ENCODE measurements at regions of chr11 and their contacts with region 1.

Region 1: DNA sequence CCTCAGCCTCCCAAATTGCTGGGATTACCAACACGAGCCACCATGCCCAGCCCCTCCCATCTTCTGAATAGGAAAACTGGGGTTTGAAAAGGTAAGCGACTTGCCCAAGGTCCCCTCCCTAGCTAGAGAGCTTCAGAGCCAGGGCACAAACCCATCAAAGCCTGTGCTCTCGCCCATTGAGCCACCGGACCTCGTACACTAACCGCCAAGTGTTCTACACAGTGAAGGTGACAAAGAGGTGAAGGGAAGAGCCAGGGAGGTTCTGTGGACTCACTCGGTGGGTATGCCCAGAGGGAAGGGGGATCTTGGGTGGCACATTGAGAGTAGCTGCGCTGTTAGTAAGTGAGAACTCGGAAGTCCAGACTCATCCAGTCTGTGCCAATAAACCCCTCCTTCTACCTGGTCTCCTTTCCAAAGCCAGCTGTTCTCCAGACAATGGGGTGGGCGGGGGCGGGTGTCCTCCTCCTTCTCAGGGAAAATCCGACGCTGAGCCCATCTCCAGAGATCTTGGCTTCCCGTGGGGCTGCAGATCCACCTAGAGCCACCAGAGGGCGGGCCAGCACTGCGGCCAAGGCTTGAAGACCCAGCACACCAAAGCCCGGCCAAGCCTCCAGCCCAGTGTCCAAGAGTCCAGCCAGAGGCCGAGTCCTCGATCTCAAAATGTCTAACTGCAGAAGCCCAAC is 3.2 kb upstream of the RTN4RL2 start:
- DNase-seq: no peak
- H3K4me3 ChIP-seq: peak overlapping the region; percentile 25; the same call in 1 of the 2 replicates
- CTCF ChIP-seq: peak; percentile 98

Region 2: GRCh38 chr11:57260937-57261783 is 195.9 kb before region 1 on chr11:
- CTCF ChIA-PET with region 1: no interaction called
- POLR2A ChIA-PET with region 1: no interaction called
- DNase-seq: no peak
- H3K4me3 ChIP-seq: no peak overlapping the region
- CTCF ChIP-seq: no peak

Region 3: DNA sequence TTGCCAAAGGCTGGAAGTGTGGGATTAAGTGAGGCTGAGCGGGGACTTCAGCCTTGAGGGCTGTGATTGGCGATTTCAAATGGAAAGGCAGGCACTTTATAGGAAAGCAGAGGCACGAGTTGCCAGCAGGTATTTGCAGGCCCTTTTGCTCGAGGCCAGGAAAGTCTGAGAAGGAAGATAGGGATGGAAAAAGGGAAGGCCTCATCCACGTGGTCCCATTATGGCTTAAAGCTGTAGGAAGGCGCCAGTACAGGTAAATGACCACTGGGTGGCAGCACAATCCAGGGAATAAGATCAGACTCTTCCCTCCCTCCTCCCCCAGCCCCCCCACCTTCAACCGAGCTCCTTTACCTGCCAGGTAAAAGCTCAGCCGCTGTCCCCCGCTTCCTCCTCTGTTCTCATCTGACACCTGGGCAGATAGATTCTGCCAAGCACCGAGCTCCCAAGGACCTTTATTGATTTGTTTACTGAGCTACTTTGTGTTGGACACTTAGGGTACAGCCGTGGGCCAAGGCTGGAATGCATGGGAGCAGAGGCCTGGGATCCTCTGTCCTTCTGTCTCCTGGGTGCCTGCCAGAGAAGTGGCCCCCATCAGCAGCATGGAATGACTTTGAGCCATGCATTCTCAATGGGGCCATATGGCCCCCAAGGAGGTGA is 111.4 kb before region 1 on chr11:
- CTCF ChIA-PET with region 1: interaction called, 42 read pairs
- POLR2A ChIA-PET with region 1: no interaction called
- DNase-seq: no peak
- H3K4me3 ChIP-seq: no peak overlapping the region
- CTCF ChIP-seq: peak; percentile 72

Region 4: DNA sequence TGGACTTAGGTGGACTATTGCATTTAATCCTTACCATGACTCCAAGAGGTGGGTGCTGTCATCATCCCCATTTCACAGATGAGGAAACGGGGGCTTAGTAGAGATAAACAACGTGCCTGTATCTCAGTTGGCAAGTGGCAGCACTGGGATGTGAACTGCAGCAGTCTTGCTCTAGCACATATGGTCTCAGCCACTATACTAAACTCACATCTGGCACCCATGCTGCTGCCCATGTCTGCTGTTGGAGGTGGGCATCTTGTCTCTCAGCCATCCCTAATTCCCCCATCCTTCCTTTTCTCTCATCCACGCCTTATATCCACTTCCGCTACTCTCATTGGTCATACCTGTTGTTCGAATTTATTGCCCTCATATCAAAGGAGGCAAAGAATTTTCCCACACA is 80.0 kb before region 1 on chr11:
- CTCF ChIA-PET with region 1: no interaction called
- POLR2A ChIA-PET with region 1: no interaction called
- DNase-seq: no peak
- H3K4me3 ChIP-seq: no peak overlapping the region
- CTCF ChIP-seq: no peak

Region 5: GRCh38 chr11:57444362-57445121 is 12.6 kb before region 1 on chr11:
- CTCF ChIA-PET with region 1: interaction called, 134 read pairs
- POLR2A ChIA-PET with region 1: no interaction called
- DNase-seq: no peak
- H3K4me3 ChIP-seq: no peak overlapping the region
- CTCF ChIP-seq: no peak

Region 6: GRCh38 chr11:57487920-57488659 is 31.0 kb after region 1 on chr11:
- CTCF ChIA-PET with region 1: interaction called, 140 read pairs
- POLR2A ChIA-PET with region 1: no interaction called
- DNase-seq: no peak
- H3K4me3 ChIP-seq: no peak overlapping the region
- CTCF ChIP-seq: no peak

Region 7: DNA sequence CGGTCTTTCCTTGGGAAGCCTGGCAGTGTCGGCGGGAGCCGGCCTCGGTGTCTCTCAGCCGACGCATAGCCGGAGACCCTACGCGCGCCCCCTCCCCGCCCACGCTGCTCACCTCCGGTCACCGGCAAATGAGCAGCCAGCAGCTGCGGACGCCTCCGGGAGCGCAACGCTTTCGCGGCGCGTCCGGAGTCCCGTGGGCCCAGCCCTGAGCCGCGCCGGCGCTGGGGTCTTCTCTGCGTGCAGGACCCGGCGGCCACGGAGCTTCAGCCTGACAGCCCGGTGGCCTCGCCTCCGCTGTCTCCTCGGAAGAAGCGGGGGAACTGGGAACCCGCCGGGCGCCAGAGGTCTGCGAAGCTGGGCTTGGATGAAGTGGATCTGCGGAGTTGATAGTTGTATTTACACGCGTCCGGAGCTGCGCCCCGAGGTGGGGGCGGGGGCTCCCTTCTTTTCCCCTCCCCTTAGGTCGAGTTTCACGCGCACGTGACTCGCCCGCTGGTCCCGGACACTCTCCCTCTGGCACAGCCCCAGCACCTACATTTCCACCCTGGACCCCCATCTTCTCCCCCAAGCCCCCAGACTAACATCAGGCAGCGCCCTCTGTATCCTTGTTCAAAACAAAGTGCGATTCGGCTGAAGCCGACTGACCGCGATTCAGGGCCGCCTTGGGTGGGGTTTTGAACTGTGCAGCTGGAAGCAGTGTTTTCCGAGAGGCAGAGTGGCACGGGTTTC is 58.4 kb after region 1 on chr11 and contains the start of gene SLC43A1:
- CTCF ChIA-PET with region 1: interaction called, 99 read pairs
- POLR2A ChIA-PET with region 1: no interaction called
- DNase-seq: no peak
- H3K4me3 ChIP-seq: peak within 1 kb of the TSS; percentile 85
- CTCF ChIP-seq: peak; percentile 0

Region 8: DNA sequence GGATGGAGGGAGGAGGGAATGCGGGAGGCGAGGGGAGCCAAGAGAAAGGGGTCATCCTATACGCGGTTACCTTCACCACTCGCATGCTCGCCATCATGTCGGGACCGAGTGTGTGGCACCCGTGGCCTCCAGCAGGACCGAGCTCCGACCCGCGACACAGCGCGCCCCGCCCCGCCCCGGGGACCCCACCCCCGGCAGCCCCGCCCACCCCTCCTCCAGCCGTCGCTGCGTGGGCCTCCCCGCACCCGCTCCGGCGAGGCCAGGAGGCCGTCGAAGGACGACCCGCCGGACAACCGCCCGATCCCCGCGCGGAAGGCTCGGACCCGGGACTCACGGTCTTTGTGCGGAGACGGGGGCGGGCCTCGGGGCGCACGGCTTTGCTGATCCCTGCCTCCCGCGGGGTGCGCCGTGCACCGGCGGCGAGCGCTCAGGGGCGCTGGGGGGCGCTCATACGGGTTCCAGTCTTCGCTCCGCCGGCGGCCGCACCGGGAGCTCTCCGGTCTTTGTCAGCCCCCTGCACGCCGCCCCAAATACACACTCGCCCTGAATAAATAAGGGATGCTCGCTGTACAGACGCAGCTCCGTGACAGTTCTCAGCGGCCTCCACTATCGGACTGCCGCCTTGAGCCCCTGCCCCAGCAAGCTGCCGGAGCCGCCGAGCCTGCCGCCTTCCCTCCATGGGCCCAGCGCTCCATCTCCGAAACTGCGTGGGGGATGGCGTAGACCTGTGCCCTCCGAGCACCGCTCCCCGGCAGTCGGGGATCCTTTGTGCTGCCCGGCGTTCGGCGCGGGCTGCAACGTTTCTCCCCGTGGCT is 110.6 kb after region 1 on chr11 and contains the start of gene UBE2L6:
- CTCF ChIA-PET with region 1: interaction called, 14 read pairs
- POLR2A ChIA-PET with region 1: no interaction called
- DNase-seq: no peak
- H3K4me3 ChIP-seq: peak within 1 kb of the TSS; percentile 89
- CTCF ChIP-seq: peak; percentile 64

Region 9: DNA sequence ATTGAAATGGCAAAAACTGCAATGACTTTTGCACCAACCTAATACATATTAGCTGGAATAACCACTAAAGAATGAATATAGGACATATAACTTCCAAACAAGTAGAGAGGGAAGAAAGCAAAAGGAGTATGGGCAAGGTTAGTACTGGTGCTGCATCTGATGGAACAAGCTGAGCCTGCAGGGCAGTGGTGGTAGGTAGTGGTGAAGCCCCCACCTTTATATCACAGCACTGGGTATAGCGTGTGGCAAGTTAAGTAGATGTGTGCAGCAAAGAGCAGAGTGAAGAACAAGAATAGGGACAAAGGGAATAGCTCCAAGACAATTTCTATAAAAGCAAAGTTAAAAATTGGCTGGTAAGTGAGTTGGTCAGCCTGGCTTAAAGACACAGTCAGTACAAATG is 366.8 kb after region 1 on chr11:
- CTCF ChIA-PET with region 1: no interaction called
- POLR2A ChIA-PET with region 1: no interaction called
- DNase-seq: no peak
- H3K4me3 ChIP-seq: no peak overlapping the region
- CTCF ChIP-seq: no peak